ENCODE measurements at regions of chr1 and their contacts with region 1.

Region 1: GRCh38 chr1:203625628-203626019 is 1.0 kb upstream of the ATP2B4 start:
- DNase-seq: peak; percentile 81
- H3K4me3 Mint-ChIP-seq: peak overlapping the region; percentile 8
- H3K27ac Mint-ChIP-seq: peak overlapping the region; percentile 91
- H3K4me1 Mint-ChIP-seq: peaks cover 65% of the 10 kb centered on the region
- H3K27me3 Mint-ChIP-seq: no peaks in the 10 kb centered on the region

Region 2: DNA sequence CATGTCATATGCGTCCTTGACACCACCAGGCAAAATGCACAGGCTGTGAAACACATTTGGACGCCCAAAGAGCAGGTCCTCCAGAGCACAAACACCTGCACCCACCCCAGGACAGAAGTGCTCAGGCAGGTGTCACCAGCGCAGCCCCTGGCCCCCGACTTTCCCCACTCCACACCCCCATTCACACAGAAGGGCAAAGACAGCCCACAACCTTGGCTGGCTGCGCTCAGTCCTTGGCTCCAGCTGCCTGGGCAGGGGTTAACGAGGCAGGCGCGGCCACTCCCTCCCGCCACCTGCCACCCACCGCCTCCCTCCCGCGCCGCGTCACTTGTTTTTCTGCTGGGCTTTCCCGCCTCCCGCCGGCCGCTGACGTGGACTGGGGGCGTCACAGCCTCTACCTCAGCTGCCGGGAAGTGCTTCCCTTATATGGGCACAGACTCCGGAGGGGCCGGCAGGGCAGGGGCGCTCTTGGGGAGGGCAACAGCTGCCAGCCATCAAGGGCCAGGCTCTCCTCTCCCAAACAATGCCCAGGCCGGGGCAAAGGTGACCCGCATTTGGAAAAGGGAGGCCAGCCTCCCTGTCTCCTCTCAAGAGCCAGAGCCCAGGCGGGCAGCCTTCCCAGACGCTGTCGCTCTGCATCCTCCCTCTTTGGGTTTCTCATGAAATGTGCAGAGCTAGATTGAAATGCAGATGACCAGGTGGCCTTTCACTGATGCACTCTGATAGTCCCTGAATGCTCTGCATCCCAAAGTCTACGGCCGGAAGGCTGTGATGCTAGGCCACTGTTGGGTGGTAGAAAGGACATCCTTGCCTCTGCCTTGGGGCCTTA is 335.1 kb before region 1 on chr1:
- CTCF ChIA-PET with region 1: no interaction called
- intact Hi-C with region 1: loop called (anchors 5 kb)
- DNase-seq: peak; percentile 99
- H3K4me3 Mint-ChIP-seq: peak overlapping the region; percentile 83
- H3K27ac Mint-ChIP-seq: peak overlapping the region; percentile 99
- H3K4me1 Mint-ChIP-seq: peaks cover 82% of the 10 kb centered on the region
- H3K27me3 Mint-ChIP-seq: no peaks in the 10 kb centered on the region

Region 3: GRCh38 chr1:203512830-203513611 is 112.6 kb before region 1 on chr1:
- CTCF ChIA-PET with region 1: no interaction called
- intact Hi-C with region 1: loop called (anchors 1 kb)
- DNase-seq: peak; percentile 83
- H3K4me3 Mint-ChIP-seq: peak overlapping the region; percentile 42
- H3K27ac Mint-ChIP-seq: peak overlapping the region; percentile 82
- H3K4me1 Mint-ChIP-seq: peaks cover 36% of the 10 kb centered on the region
- H3K27me3 Mint-ChIP-seq: no peaks in the 10 kb centered on the region

Region 4: GRCh38 chr1:203612932-203613682 is 12.5 kb before region 1 on chr1:
- CTCF ChIA-PET with region 1: interaction called, 6 read pairs
- intact Hi-C with region 1: loop called (anchors 1 kb)
- DNase-seq: peak; percentile 57
- H3K4me3 Mint-ChIP-seq: no peak overlapping the region
- H3K27ac Mint-ChIP-seq: peak overlapping the region; percentile 43
- H3K4me1 Mint-ChIP-seq: peaks cover 26% of the 10 kb centered on the region
- H3K27me3 Mint-ChIP-seq: no peaks in the 10 kb centered on the region

Region 5: DNA sequence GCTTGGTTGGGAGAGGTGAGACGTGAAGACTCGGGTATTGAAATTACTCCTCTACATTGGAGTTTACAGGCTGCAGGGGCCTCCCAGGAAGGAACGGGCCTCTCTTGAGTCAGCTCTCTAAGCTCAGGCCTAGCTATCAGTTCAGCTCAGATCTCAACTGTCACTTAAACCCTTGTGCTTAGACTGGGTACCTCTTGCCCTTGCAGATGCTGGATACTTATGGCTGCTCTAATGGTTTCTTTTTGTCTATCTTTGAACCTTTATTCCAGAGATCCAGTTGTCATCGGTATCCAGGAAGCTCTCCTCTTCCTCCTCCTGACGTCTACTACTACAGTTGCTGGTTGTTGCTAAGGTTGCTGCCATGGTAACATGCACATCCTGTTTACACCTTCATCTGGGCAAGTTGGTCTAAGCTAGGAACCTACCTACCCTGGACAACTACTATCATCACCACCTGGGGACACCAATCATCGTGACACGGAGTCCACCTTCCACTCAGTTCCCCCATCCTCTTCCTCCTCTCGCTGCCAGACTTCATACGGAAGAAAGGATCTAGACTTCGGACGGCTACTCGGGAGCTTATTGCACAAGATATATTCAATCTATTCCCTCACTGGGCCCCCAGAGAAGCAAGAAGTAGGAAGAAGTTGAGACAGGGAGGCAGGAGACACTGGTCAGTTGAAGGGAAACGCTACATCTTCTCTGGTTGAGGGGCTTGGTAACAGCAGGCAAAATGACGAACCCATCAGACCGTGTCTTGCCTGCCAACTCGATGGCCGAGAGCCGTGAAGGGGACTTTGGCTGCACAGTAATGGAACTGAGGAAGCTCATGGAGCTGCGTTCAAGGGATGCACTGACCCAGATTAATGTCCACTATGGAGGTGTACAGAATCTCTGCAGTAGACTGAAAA is 57.1 kb after region 1 on chr1:
- CTCF ChIA-PET with region 1: interaction called, 25 read pairs
- intact Hi-C with region 1: loop called (anchors 1 kb)
- DNase-seq: peak; percentile 71
- H3K4me3 Mint-ChIP-seq: peak overlapping the region; percentile 44
- H3K27ac Mint-ChIP-seq: peak overlapping the region; percentile 79
- H3K4me1 Mint-ChIP-seq: peaks cover 26% of the 10 kb centered on the region
- H3K27me3 Mint-ChIP-seq: no peaks in the 10 kb centered on the region

Region 6: GRCh38 chr1:203769505-203770343 is 144.1 kb after region 1 on chr1:
- CTCF ChIA-PET with region 1: interaction called, 3 read pairs
- intact Hi-C with region 1: loop called (anchors 2 kb)
- DNase-seq: no peak
- H3K4me3 Mint-ChIP-seq: no peak overlapping the region
- H3K27ac Mint-ChIP-seq: no peak overlapping the region
- H3K4me1 Mint-ChIP-seq: peaks cover 25% of the 10 kb centered on the region
- H3K27me3 Mint-ChIP-seq: no peaks in the 10 kb centered on the region

Region 7: DNA sequence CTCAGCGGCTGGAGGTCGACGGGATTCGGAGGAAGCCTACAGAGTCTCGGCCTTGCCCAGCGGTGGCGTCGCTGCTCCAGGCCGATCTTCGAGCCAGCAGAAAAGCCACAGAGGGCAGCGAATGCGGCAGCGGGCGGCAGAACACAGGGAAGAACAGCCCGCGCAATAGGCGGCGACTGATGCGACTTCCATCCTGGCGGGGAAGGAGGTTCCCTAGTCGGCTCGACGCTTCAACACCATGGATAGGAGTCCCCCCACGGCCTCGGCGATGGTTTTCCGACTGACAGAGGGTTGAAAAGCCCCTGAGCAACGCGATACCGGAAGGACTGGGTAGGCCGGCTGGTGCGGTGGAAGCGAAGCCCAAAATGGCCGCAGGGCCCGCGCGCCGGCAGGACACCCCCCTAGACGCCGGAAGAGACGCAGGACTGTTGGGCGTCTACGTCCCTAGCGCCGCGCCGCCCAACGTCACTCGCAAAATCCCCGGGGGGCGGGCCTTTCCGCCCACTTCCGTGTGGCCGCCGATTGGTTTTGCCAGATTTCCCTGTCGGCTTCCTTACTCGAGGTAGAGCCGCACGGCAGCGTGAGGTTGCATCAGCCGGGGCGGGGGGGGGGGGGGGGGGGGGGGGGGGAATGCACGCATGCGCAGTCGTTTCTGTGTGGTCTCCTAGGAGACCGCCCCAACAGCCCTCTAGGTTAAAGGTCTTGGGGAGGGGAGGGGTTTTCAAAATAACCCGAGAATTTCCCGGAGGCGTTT is 786.0 kb after region 1 on chr1 and contains the start of gene PPP1R15B:
- CTCF ChIA-PET with region 1: no interaction called
- intact Hi-C with region 1: loop called (anchors 10 kb)
- DNase-seq: peak; percentile 97
- H3K4me3 Mint-ChIP-seq: peak within 1 kb of the TSS; percentile 99
- H3K27ac Mint-ChIP-seq: peak within 1 kb of the TSS; percentile 99
- H3K4me1 Mint-ChIP-seq: peaks cover 8% of the 10 kb centered on the region
- H3K27me3 Mint-ChIP-seq: no peaks in the 10 kb centered on the region
- total RNA-seq, gene PPP1R15B: 63.7 to 65.6 TPM